Heart right ventricle (tissue), 16 donors: ENCODE measurements at regions of chr20 and their contacts with region 1.

Region 1: DNA sequence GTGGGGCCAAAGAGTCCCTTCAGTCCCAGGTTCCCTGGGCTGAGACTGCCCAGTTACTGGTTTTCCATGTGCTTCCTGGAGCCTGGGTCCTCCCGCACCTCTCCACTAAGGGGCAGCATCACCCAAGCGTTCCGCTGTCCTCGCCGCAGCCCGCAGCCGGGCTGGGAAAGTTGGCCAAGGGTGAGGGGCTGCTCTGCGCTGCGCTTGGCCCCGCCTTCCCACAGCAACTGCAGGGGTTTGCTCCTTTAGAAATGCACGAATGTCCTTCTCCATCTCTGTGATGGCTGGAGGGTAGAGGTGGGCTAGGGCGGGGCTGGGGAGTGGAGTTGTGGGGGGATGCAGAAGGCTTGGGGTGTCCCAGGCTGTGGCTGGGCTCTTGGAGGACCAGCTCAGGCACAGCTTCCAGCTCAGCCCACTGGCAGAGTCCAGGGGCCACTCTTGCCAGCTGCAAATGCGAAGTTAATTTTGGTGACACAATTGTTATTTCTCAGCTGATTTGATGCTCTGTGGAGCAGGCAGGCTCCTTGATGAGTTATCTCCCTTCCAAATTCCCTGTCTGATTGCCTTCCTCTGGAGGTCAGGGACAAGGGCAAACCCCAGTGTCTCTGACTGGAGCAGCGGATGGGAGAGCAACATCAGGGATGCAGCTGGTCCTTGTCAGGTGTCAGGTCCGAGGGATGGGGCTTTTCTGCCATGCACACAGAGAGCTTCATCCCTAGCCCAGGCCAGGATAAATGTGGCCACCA is 63.2 kb downstream of the NOL4L start:
- DNase-seq: peak; percentile 64 to 71
- ATAC-seq: peak; percentile 67 to 82 (median 74)
- H3K4me3 ChIP-seq: no peak overlapping the region
- H3K27ac ChIP-seq: no peak overlapping the region
- H3K4me1 ChIP-seq: peaks cover 4 to 61% (median 26%) of the 10 kb centered on the region in 9 donors
- H3K27me3 ChIP-seq: no peaks in the 10 kb centered on the region
- CTCF ChIP-seq: peak; percentile 70 to 90 (median 87)

Region 2: DNA sequence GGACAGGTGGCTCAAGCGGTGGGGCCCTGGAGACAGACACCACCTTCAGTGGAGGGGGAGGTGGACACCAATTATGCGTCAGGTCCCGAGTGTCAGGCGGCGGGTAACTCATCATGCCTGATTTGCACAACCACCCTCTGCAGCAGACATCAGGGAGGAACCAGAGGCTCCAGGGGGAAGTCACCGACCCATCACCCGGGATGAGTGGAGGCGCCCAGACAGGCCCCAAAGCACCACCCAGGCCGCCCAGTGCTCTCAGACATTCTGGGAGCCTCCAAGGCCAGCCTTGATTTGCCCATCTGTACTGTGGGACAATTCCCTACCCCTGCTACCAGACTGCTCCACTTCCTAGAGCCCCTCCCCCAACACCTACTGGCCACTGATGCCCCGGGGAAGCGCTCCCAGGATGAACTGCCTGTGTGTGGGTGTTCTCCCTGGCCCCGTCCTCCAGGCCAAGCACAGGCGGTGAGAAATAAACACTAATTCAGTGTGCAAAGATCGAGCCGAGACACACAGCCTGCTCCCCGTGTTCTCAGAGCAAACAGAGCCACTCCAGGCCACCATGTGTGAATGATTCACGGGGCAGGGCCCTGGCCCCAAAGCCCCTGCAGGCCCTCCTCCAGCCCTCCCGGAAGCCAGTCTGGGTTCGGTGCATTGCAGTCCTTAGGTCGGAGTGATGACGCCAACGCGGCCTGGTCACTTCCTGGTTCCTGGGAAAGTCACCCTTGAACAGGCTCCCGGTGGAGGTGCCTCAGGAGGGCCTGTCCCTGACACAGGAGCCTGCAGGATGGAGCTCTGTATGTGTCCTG is 56.7 kb before region 1 on chr20:
- intact Hi-C with region 1: loop called in 1 of 10 experiments (anchors 2 kb)
- DNase-seq: peak; percentile 67 to 71
- ATAC-seq: peak in 6 of 8 donors; percentile 40 to 76 (median 55)
- H3K4me3 ChIP-seq: no peak overlapping the region
- H3K27ac ChIP-seq: peak overlapping the region in 9 of 10 donors; percentile 38 to 94 (median 62)
- H3K4me1 ChIP-seq: peaks cover 13 to 75% (median 50%) of the 10 kb centered on the region in 9 donors
- H3K27me3 ChIP-seq: no peaks in the 10 kb centered on the region
- CTCF ChIP-seq: no peak

Region 3: GRCh38 chr20:32585011-32585518 is 63.1 kb after region 1 on chr20 and contains the start of gene NOL4L:
- intact Hi-C with region 1: loop called in 2 of 10 experiments (anchors 5 kb)
- DNase-seq: peak in 1 of 2 donors; percentile 34
- ATAC-seq: peak in 2 of 8 donors; percentile 6 to 13
- H3K4me3 ChIP-seq: peak within 1 kb of the TSS; percentile 35 to 71 (median 66)
- H3K27ac ChIP-seq: peak within 1 kb of the TSS in 4 of 10 donors; percentile 30 to 73 (median 64)
- H3K4me1 ChIP-seq: peaks cover 0 to 30% (median 4%) of the 10 kb centered on the region in 9 donors
- H3K27me3 ChIP-seq: peaks cover 0 to 44% (median 21%) of the 10 kb centered on the region in 7 donors
- CTCF ChIP-seq: no peak
- total RNA-seq, gene NOL4L: 4.4 to 10.1 (median 6.0) TPM

Region 4: GRCh38 chr20:32652739-32653526 is 131.0 kb after region 1 on chr20:
- intact Hi-C with region 1: loop called (anchors 1 to 2 kb)
- DNase-seq: peak; percentile 85 to 87
- ATAC-seq: peak; percentile 93 to 99 (median 97)
- H3K4me3 ChIP-seq: no peak overlapping the region
- H3K27ac ChIP-seq: no peak overlapping the region
- H3K4me1 ChIP-seq: peaks cover 0 to 9% (median 4%) of the 10 kb centered on the region in 9 donors
- H3K27me3 ChIP-seq: no peaks in the 10 kb centered on the region
- CTCF ChIP-seq: peak; percentile 88 to 97 (median 95)

Region 5: GRCh38 chr20:32779500-32780211 is 257.7 kb after region 1 on chr20:
- intact Hi-C with region 1: loop called in 3 of 10 experiments (anchors 10 kb)
- DNase-seq: no peak
- ATAC-seq: no peak
- H3K4me3 ChIP-seq: no peak overlapping the region
- H3K27ac ChIP-seq: no peak overlapping the region
- H3K4me1 ChIP-seq: peaks cover 0 to 17% (median 4%) of the 10 kb centered on the region in 9 donors
- H3K27me3 ChIP-seq: no peaks in the 10 kb centered on the region
- CTCF ChIP-seq: no peak

Region 6: GRCh38 chr20:32789896-32790750 is 268.2 kb after region 1 on chr20:
- intact Hi-C with region 1: loop called in 2 of 10 experiments (anchors 10 kb)
- DNase-seq: peak; percentile 70 to 71
- ATAC-seq: peak; percentile 77 to 92 (median 87)
- H3K4me3 ChIP-seq: no peak overlapping the region
- H3K27ac ChIP-seq: no peak overlapping the region
- H3K4me1 ChIP-seq: peaks cover 0 to 21% (median 10%) of the 10 kb centered on the region in 9 donors
- H3K27me3 ChIP-seq: no peaks in the 10 kb centered on the region
- CTCF ChIP-seq: peak; percentile 96 to 99 (median 98)